ENCODE measurements at regions of chr4 and their contacts with region 1.

Region 1: DNA sequence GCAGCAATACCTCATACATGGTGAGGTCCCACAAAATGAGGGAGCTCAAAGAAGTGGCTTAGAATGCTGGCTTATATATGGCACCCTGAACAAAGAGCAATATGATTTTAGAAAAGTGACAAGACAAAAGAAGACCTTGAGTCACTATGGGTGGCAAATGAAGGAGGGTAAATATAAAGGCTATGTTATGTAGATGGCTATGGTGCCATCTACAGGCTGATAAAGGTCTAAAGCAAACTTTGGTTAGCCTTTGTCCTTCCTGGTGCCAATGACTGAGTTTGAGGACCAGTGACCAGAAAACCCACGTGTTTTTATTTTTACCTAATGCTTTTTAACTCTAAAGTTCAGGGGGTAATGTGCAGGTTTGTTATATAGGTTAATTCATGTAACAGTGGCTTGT is 151.8 kb downstream of the CCNG2 start:
- DNase-seq: no peak
- H3K4me3 ChIP-seq: no peak overlapping the region
- H3K27ac ChIP-seq: no peak overlapping the region
- H3K4me1 ChIP-seq: no peaks in the 10 kb centered on the region
- H3K27me3 ChIP-seq: no peaks in the 10 kb centered on the region
- CTCF ChIP-seq: peak; percentile 70

Region 2: DNA sequence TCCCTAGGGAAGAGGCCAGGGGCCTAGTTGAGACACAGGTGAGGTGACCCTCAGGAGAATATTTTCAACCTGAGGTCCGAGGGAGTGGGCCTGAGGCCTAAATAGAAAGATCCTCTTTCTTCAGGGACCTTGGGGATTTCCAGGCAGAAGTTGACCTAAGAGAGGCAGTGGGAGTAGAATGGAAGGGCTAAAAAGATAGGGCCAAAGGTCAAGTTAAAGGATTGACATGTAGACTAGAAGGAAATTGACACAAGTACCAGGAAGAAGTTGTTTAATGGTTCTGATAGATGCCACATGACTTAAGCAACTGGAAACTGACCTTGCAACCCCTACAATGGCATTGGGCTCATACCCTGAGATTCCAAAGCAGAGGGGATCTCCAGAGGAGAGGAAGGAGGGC is 796.9 kb before region 1 on chr4:
- CTCF ChIA-PET with region 1: no interaction called
- POLR2A ChIA-PET with region 1: no interaction called
- intact Hi-C with region 1: loop called (anchors 5 kb)
- DNase-seq: no peak
- H3K4me3 ChIP-seq: no peak overlapping the region
- H3K27ac ChIP-seq: no peak overlapping the region
- H3K4me1 ChIP-seq: no peaks in the 10 kb centered on the region
- H3K27me3 ChIP-seq: no peaks in the 10 kb centered on the region
- CTCF ChIP-seq: no peak

Region 3: DNA sequence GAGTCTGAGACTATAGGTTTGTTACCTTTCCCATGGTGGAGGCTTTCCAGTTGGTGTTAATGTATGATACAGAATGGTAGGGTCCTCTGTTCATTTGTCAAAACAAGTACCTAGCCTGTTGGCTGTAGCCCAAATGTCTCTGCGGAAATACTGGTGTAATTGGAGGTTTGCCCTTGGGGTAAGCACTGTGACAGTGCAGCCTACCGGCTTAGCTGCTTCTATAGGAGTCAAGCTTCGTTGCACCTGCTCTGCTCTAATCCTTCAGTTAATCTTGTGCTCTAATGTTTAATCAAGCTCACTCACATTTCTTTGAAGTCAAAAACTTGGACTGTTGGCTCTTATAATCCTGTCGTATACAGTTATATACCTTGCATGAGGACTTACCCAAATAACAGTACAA is 51.6 kb after region 1 on chr4:
- CTCF ChIA-PET with region 1: no interaction called
- POLR2A ChIA-PET with region 1: no interaction called
- intact Hi-C with region 1: no loop called
- DNase-seq: no peak
- H3K4me3 ChIP-seq: no peak overlapping the region
- H3K27ac ChIP-seq: no peak overlapping the region
- H3K4me1 ChIP-seq: no peaks in the 10 kb centered on the region
- H3K27me3 ChIP-seq: no peaks in the 10 kb centered on the region
- CTCF ChIP-seq: no peak